Ovary (tissue), 10 donors: ENCODE measurements at regions of chr15 and their contacts with region 1.

Region 1: GRCh38 chr15:99059010-99059981 is 45.6 kb upstream of the SYNM start:
- DNase-seq: peak; percentile 84 to 92 (median 89)
- H3K4me3 ChIP-seq: peak overlapping the region; percentile 37
- H3K27ac ChIP-seq: peak overlapping the region; percentile 72 to 81
- H3K4me1 ChIP-seq: no peaks in the 10 kb centered on the region
- H3K27me3 ChIP-seq: no peaks in the 10 kb centered on the region
- CTCF ChIP-seq: peak; percentile 71 to 93 (median 86)
- EP300 ChIP-seq: no peak
- POLR2A ChIP-seq: no peak

Region 2: DNA sequence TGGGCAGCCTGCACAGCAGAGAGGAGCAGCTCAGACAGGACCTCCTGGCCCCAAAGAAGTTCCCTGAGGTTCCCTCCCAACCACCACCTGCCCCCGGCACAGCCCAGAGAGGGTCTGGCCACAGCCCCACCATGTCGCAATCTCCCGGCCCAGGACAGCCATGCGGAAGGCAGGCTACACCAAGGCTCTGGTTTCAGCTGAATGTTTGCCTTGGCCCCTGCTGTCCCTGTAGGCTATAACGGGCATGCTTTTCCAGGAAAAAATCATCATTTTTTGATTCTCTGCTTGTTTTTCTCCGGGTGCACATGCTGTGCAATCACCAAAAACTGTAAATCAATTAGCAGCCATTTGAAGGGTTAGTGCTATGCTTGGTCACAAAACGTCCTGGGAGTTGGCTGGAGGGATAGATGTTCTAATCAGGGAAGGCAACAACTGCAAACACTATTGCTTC is 553.7 kb before region 1 on chr15:
- intact Hi-C with region 1: loop called in 1 of 4 experiments (anchors 5 kb)
- DNase-seq: peak in 4 of 5 donors; percentile 47 to 71 (median 50)
- H3K4me3 ChIP-seq: no peak overlapping the region
- H3K27ac ChIP-seq: no peak overlapping the region
- H3K4me1 ChIP-seq: peaks cover 2% of the 10 kb centered on the region
- H3K27me3 ChIP-seq: no peaks in the 10 kb centered on the region
- CTCF ChIP-seq: no peak
- EP300 ChIP-seq: no peak
- POLR2A ChIP-seq: no peak

Region 3: DNA sequence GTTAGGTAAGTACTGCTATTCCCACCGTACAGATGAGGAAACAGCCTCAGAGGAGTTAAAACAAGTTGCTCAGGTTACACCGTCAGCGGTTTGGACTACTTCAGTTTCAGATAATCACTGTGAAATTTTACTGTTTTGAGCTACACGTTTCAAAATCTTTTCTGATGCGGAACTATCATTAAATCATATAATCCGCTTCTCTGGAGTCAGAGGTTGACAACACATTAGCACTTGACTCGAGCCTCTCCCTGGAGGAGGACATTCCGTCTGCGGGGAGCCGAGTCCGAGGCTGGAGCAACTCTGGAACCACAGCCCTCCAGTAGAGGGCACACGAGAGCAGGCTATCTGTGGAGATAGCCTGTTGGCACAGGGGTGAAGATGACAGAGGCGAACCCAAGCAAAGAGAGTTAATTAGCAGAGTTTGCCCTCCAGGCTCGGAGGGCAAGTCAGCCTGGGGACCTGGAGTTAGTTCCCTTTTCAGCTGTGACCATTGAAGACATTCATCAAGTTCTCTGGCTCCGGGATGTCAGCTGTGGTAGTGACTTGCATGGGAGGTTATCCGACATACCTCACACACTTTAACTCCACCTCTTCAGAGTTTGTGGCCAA is 279.7 kb before region 1 on chr15:
- intact Hi-C with region 1: loop called in 1 of 4 experiments (anchors 10 kb)
- DNase-seq: peak; percentile 71 to 85 (median 82)
- H3K4me3 ChIP-seq: no peak overlapping the region
- H3K27ac ChIP-seq: no peak overlapping the region
- H3K4me1 ChIP-seq: peaks cover 15% of the 10 kb centered on the region
- H3K27me3 ChIP-seq: no peaks in the 10 kb centered on the region
- CTCF ChIP-seq: peak; percentile 53 to 72 (median 59)
- EP300 ChIP-seq: no peak
- POLR2A ChIP-seq: no peak

Region 4: GRCh38 chr15:99110581-99111320 is 51.5 kb after region 1 on chr15:
- intact Hi-C with region 1: no loop called
- DNase-seq: no peak
- H3K4me3 ChIP-seq: no peak overlapping the region
- H3K27ac ChIP-seq: no peak overlapping the region
- H3K4me1 ChIP-seq: peaks cover 3% of the 10 kb centered on the region
- H3K27me3 ChIP-seq: no peaks in the 10 kb centered on the region
- CTCF ChIP-seq: no peak
- EP300 ChIP-seq: no peak
- POLR2A ChIP-seq: no peak